ENCODE measurements at regions of chr22 and their contacts with region 1.

Region 1: GRCh38 chr22:42369245-42370041 is 62.8 kb downstream of the NFAM1 start:
- DNase-seq: peak; percentile 93 to 99 (median 96)

Region 2: GRCh38 chr22:42294034-42294985 is 75.1 kb before region 1 on chr22:
- intact Hi-C with region 1: loop called (anchors 10 kb)
- DNase-seq: peak in 1 of 10 donors; percentile 85

Region 3: DNA sequence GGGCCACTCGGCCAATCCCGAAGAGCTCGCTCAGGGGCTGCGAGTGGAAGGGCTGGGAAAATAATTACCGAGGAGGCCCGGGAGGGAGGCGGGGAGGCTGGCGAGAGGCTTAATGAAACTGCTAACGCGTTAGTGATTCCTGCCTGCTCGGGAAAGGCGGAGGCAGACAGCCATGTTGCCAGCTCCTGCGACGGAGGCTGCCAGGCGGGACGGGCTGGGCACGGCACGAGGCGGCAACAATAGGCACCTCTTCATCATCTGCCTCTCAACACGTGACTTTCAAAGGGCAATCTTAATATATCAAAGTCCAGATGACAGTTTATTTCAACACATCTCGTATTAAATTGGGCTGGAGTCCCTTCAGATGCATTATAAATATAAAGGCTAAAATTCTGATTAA is 31.0 kb before region 1 on chr22:
- intact Hi-C with region 1: loop called (anchors 2 kb)
- DNase-seq: peak in 9 of 10 donors; percentile 50 to 94 (median 63)

Region 4: GRCh38 chr22:42347281-42347824 is 22.1 kb before region 1 on chr22:
- intact Hi-C with region 1: loop called (anchors 2 kb)
- DNase-seq: peak in 1 of 10 donors; percentile 79

Region 5: GRCh38 chr22:42432020-42432596 is 62.7 kb after region 1 on chr22 and contains the start of gene NFAM1:
- intact Hi-C with region 1: loop called (anchors 5 kb)
- DNase-seq: peak in 1 of 10 donors; percentile 24

Measured in posterior cingulate gyrus (tissue), 11 donors.